Activated CD4-positive, alpha-beta T cell treated with anti-CD3 and anti-CD28 coated beads for 36 hours (primary cell): ENCODE measurements at regions of chr10 and their contacts with region 1.

Region 1: GRCh38 chr10:109883859-109884771 is 39.2 kb downstream of the XPNPEP1 start:
- DNase-seq: peak; percentile 73
- ATAC-seq: peak; percentile 71
- H3K4me3 Mint-ChIP-seq: no peak overlapping the region
- H3K27ac Mint-ChIP-seq: no peak overlapping the region
- H3K4me1 Mint-ChIP-seq: peaks cover 10% of the 10 kb centered on the region
- H3K27me3 Mint-ChIP-seq: no peaks in the 10 kb centered on the region

Region 2: GRCh38 chr10:109902934-109903589 is 18.9 kb after region 1 on chr10:
- CTCF ChIA-PET with region 1: interaction called, 13 read pairs
- POLR2A ChIA-PET with region 1: no interaction called
- intact Hi-C with region 1: no loop called
- DNase-seq: no peak
- ATAC-seq: peak; percentile 90
- H3K4me3 Mint-ChIP-seq: peak overlapping the region; percentile 26
- H3K27ac Mint-ChIP-seq: peak overlapping the region; percentile 69
- H3K4me1 Mint-ChIP-seq: peaks cover 55% of the 10 kb centered on the region
- H3K27me3 Mint-ChIP-seq: no peaks in the 10 kb centered on the region

Region 3: DNA sequence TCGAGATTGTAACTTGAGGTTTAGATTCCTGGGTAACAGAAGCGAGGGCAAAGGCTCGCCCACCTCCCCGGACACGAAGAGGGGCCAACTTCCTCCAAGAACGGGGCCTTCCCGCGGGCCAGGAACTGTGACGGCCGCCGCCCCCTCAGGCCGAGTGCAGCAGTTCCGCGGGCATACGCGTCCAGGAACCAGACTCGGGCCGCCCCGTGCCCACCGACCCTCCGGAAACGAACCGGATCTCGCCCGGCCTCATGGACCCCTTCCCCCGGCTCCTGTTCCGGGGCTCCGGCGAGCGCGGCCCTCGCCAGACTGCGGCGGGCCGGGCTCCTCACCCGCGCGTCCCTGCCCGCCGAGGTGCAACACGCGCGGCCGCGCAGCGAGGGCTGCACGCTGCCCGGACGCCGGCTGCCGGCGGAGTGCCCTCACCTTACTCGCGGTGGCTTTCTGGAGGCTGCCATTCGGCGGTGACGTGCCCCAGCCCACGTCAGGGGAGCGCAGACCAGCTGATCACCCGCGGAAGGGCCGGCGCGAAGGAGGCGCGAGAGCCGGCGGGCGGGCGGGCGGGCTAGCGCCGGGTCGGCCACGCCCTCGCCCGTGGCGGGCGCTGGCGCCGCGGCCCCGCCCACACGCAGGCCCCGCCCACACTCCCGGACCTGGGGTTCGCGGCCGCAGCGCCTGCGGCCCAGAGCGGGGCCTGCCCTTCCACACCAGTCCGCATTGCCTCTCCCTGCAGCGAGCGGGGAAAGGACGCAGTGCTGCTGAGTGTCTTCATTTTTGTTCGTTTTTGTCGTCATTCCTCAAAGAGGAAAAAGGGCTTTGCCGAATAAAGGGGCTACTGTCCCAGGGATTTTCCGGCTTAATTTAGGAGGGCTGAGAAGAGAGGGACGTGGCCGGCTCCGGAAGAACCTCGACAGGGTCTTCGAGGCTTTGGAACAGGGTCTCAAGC is 39.1 kb after region 1 on chr10 and contains the start of gene XPNPEP1:
- CTCF ChIA-PET with region 1: interaction called, 11 read pairs
- POLR2A ChIA-PET with region 1: no interaction called
- intact Hi-C with region 1: loop called in 1 of 2 experiments (anchors 5 kb)
- DNase-seq: peak; percentile 90
- ATAC-seq: peak; percentile 90
- H3K4me3 Mint-ChIP-seq: peak within 1 kb of the TSS; percentile 94
- H3K27ac Mint-ChIP-seq: peak within 1 kb of the TSS; percentile 94
- H3K4me1 Mint-ChIP-seq: peaks cover 48% of the 10 kb centered on the region
- H3K27me3 Mint-ChIP-seq: no peaks in the 10 kb centered on the region
- total RNA-seq, gene XPNPEP1: 85.4 to 91.2 TPM

Region 4: DNA sequence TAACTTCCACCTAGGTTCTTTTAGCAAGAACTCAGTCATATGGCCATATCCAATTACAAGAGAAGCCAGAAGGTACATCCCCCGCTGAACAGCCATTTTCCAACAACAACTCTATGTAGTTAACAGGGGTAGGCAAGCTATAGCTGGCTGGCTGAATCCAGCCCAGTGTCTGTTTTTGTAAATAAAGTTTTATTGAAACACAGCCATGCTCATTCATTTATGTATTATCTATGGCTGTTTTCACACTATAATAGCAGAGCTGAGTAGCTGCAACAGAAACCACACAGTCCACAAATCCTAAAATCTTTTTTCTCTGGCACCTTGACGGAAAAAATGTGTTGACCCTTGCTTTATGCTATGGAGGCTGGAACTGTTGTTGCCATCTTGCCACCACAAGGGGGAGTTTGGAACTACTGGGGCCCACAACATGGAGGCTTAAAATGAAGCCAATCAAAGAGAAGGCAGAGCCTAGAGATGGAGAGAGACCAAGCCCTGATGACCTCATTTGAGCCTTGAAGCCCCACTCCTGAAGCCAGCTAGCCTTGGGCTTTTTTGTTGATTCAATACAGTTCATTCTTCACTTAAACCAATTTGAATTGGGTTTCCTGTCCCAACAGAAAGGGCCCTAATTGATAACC is 72.5 kb after region 1 on chr10:
- CTCF ChIA-PET with region 1: interaction called, 6 read pairs
- POLR2A ChIA-PET with region 1: no interaction called
- intact Hi-C with region 1: loop called (anchors 1 to 2 kb)
- DNase-seq: peak; percentile 54
- ATAC-seq: peak; percentile 96
- H3K4me3 Mint-ChIP-seq: no peak overlapping the region
- H3K27ac Mint-ChIP-seq: no peak overlapping the region
- H3K4me1 Mint-ChIP-seq: peaks cover 2% of the 10 kb centered on the region
- H3K27me3 Mint-ChIP-seq: no peaks in the 10 kb centered on the region

Region 5: GRCh38 chr10:109987452-109988211 is 103.5 kb after region 1 on chr10:
- CTCF ChIA-PET with region 1: interaction called, 10 read pairs
- POLR2A ChIA-PET with region 1: no interaction called
- intact Hi-C with region 1: no loop called
- DNase-seq: no peak
- ATAC-seq: no peak
- H3K4me3 Mint-ChIP-seq: no peak overlapping the region
- H3K27ac Mint-ChIP-seq: no peak overlapping the region
- H3K4me1 Mint-ChIP-seq: peaks cover 2% of the 10 kb centered on the region
- H3K27me3 Mint-ChIP-seq: no peaks in the 10 kb centered on the region

Region 6: DNA sequence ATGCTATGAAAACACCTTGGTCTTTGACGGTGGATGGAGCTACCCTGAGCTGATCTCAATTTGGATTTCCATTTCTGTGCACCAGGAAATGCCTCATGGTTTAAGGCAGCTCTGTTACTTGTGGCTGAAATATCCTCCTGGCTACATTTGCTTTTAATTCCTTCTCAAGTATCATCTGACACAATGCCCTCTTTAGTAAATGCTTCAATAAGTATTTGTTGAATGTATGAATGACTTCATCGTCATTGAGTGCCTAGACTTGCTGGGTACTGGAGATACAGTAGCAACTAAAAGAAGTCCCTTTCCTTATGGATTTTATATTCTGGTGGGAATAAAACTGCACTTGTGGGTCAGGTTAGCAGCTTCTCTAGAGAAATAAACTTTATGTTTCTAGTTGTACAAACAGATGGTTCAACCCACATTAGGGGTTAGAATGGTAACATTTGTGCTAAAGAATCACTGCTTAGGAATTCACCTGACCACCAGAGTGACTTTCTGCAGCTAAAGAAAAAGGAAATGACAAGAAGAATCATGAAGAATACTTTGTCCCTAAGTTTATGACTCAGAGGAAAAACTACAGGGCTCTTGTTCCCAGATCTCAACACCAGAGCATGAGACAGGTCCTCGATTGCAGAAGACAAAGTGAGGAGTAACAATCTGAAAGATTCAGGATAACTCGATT is 442.4 kb after region 1 on chr10:
- CTCF ChIA-PET with region 1: no interaction called
- POLR2A ChIA-PET with region 1: no interaction called
- intact Hi-C with region 1: no loop called
- DNase-seq: no peak
- ATAC-seq: peak; percentile 38
- H3K4me3 Mint-ChIP-seq: no peak overlapping the region
- H3K27ac Mint-ChIP-seq: peak overlapping the region; percentile 63
- H3K4me1 Mint-ChIP-seq: peaks cover 42% of the 10 kb centered on the region
- H3K27me3 Mint-ChIP-seq: peaks cover 4% of the 10 kb centered on the region